GM13977 (cell line): ENCODE measurements at regions of chr5 and their contacts with region 1.

Region 1: DNA sequence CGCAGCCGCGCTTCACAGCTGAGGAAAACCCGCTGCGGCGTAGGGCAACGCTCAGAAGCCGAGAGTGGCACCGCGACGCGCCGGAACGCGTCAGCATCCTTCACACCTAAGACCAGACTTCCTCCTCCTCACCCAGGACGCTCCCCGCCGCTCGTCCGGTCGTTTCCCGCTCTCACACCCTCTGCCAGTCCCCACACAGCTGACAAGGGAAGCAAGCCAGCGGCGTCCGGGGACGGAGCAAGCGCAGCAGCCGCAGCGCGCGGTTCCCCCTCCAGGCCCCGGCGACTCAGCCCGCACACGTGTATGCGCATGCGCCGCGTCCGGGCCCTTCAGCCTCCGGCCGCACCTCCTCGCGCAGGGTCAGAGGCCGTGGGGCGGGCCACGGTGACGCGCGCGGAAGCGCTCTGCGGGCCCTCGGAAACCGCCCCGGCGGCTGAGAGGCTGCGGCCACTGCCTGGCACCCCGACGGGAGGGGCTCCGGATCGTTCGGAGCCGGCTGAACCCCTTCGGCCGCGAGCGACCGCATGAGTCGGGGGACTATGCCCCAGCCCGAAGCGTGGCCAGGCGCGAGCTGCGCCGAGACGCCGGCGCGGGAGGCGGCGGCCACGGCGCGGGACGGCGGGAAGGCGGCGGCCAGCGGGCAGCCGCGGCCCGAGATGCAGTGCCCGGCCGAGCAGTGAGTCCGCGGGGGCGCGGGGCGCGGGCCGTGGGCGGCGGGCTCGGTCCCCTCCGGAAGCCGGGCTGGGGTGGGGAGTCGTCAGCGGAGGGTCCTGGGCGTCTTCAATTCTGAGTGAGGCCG is at the start of gene OTULIN:
- DNase-seq: peak; percentile 97
- CTCF ChIP-seq: no peak

Region 2: GRCh38 chr5:14081791-14082190 is 582.7 kb before region 1 on chr5:
- in situ Hi-C with region 1: no loop called
- DNase-seq: no peak
- CTCF ChIP-seq: no peak

Region 3: DNA sequence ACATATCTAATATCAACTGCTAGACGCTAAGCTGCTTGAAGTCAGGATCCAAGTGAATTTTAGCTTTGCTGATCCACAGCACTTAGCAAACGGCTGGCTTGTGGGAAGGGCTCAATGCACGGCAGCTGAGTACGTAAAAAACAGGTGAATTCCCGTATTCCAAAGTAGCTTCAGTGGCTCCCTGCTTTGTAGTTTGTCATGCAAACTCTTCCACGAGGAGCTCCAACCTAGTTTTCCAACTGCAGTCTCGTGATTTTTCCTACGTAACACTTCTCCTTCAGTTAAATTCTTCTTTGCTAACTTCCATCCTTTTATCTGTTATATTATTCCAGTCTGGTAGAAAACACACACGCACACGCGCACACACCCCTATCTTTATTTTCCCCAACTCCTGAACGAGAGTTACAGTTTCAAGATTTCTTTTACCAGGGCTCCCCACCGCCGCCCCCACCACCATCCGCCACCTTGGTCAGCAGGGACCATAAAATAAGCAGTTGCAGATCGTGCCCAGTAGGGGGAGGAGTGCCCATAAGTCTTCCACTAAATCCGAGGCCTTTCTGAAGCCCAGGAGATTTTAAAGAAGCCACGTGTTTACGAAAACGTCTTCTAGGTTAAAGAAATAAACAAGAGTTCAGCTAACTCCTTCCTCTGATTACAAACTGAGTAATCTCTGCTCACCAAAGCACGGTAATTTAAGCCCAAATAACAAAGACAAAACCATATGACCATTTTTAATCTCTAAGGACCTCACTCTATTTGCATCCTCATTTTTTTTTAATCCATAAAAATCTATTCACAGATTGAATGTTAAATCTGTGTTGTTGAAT is 556.1 kb before region 1 on chr5:
- in situ Hi-C with region 1: loop called (anchors 25 kb)
- DNase-seq: peak; percentile 65
- CTCF ChIP-seq: peak; percentile 73

Region 4: GRCh38 chr5:14331386-14331781 is 333.1 kb before region 1 on chr5:
- in situ Hi-C with region 1: no loop called
- DNase-seq: no peak
- CTCF ChIP-seq: no peak